Gastrocnemius medialis (tissue), 4 donors: ENCODE measurements at regions of chr2 and their contacts with region 1.

Region 1: GRCh38 chr2:98086491-98087446 is at the start of gene VWA3B:
- DNase-seq: peak; percentile 12 to 38
- ATAC-seq: peak; percentile 76 to 81
- H3K4me3 ChIP-seq: peak within 1 kb of the TSS; percentile 56 to 63 (median 58)
- H3K27ac ChIP-seq: peak within 1 kb of the TSS in 1 of 4 donors; percentile 30
- H3K4me1 ChIP-seq: peaks cover 4 to 17% of the 10 kb centered on the region in 2 donors
- H3K27me3 ChIP-seq: no peaks in the 10 kb centered on the region
- CTCF ChIP-seq: no peak
- POLR2A ChIP-seq: no peak
- total RNA-seq, gene VWA3B: not detected

Region 2: DNA sequence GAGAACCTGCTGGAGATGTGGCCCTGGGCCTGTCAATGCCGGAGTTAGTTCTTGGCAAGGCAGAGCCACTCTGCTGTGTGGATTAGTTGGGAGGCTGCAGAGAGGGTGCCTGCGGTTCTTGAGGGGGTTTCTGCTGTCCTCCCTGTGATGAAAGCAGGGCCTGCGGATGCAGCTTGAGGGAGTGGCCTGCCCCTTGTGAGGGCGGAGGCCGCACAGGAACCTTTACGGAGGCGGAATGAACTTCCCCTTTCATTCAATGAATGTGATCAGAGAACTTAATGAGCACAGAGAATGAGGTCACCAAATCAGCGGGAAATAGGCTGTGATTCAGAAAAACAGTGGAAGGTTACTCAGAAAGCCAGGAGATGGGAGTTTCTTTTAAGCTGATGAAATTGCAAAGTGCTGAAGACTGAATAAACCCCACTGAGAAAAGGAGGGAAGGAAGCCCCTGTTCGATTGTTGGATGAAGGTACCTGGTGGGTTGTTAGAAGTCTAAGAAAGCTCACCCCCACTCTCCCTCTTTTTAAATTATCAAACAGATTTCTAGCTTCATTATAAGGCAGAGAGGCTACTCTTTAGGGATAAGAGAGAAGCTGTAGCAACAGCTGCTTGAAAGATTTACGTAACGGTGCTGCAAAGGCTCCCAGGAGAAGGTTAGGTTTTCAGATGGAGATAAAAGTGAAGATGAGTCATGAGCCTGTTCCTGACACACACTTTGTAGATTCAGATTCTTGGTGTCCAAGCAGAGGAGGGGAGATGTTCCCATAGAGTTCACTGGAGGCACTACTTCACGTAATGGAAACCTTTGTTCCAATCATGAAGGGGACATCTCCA is 47.6 kb after region 1 on chr2:
- in situ Hi-C with region 1: no loop called
- intact Hi-C with region 1: loop called (anchors 5 kb)
- DNase-seq: peak in 1 of 2 donors; percentile 53
- ATAC-seq: peak; percentile 98
- H3K4me3 ChIP-seq: peak overlapping the region in 1 of 4 donors; percentile 1
- H3K27ac ChIP-seq: peak overlapping the region; percentile 50 to 64 (median 54)
- H3K4me1 ChIP-seq: peaks cover 12 to 16% of the 10 kb centered on the region in 2 donors
- H3K27me3 ChIP-seq: no peaks in the 10 kb centered on the region
- CTCF ChIP-seq: no peak
- POLR2A ChIP-seq: no peak

Region 3: DNA sequence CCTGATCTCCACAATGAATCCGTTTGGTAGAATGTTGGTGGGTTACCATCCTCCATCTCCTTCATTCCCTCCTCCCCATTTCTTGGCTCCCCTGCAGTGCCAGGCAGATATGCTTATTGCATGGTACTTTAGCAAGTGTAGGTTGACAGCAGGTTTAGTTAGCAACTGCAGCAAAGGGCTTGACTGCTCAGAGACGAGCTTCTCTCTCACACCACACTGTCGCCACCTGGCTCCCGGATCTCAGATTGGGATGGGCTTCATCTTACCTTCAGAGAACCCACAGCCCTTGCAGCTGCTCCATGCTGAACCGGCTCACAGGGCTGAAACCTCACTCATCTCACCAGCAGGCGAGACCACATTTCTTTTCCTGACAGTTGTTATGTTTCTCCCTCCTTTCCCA is 89.0 kb after region 1 on chr2:
- in situ Hi-C with region 1: no loop called
- intact Hi-C with region 1: loop called (anchors 5 kb)
- DNase-seq: peak in 1 of 2 donors; percentile 29
- ATAC-seq: peak in 1 of 2 donors; percentile 34
- H3K4me3 ChIP-seq: no peak overlapping the region
- H3K27ac ChIP-seq: no peak overlapping the region
- H3K4me1 ChIP-seq: peaks cover 4% of the 10 kb centered on the region in 2 donors
- H3K27me3 ChIP-seq: no peaks in the 10 kb centered on the region
- CTCF ChIP-seq: peak in 1 of 5 experiments; percentile 35
- POLR2A ChIP-seq: no peak